ENCODE measurements at regions of chr14 and their contacts with region 1.

Region 1: GRCh38 chr14:53295985-53296582 is 143.0 kb upstream of the DDHD1 start:
- DNase-seq: no peak
- H3K4me3 Mint-ChIP-seq: no peak overlapping the region
- H3K27ac Mint-ChIP-seq: no peak overlapping the region
- H3K4me1 Mint-ChIP-seq: peaks cover 3% of the 10 kb centered on the region
- H3K27me3 Mint-ChIP-seq: no peaks in the 10 kb centered on the region

Region 2: GRCh38 chr14:53285805-53286204 is 10.3 kb before region 1 on chr14:
- CTCF ChIA-PET with region 1: interaction called, 12 read pairs
- POLR2A ChIA-PET with region 1: no interaction called
- intact Hi-C with region 1: no loop called
- DNase-seq: no peak
- H3K4me3 Mint-ChIP-seq: no peak overlapping the region
- H3K27ac Mint-ChIP-seq: no peak overlapping the region
- H3K4me1 Mint-ChIP-seq: no peaks in the 10 kb centered on the region
- H3K27me3 Mint-ChIP-seq: no peaks in the 10 kb centered on the region

Region 3: DNA sequence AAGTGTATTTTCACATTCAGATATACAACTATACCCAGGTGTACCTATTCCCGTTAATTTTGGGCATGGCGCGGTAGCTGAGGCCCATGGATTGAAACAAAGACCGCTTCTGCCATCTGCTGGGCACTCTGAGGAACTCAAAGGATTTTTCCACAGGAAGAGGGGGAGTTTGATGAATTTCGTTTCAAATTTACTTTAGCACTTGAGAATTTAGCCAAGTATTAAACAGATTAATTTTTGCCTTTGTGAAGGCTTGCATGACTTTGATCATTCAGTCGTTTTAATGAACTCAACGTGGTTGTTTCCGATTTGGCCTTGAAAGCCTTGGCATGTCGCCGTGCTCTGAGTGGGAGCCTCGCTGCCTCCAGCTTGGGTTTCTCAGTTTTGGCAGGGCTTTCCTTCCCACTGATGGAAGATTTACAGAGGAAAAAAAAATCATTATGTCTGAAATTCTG is 10.2 kb after region 1 on chr14:
- CTCF ChIA-PET with region 1: interaction called, 56 read pairs
- POLR2A ChIA-PET with region 1: no interaction called
- intact Hi-C with region 1: no loop called
- DNase-seq: peak; percentile 58
- H3K4me3 Mint-ChIP-seq: peak overlapping the region; percentile 55
- H3K27ac Mint-ChIP-seq: peak overlapping the region; percentile 40
- H3K4me1 Mint-ChIP-seq: peaks cover 6% of the 10 kb centered on the region
- H3K27me3 Mint-ChIP-seq: peaks cover 1% of the 10 kb centered on the region

Region 4: GRCh38 chr14:53325176-53325806 is 29.2 kb after region 1 on chr14:
- CTCF ChIA-PET with region 1: interaction called, 11 read pairs
- POLR2A ChIA-PET with region 1: no interaction called
- intact Hi-C with region 1: no loop called
- DNase-seq: no peak
- H3K4me3 Mint-ChIP-seq: no peak overlapping the region
- H3K27ac Mint-ChIP-seq: no peak overlapping the region
- H3K4me1 Mint-ChIP-seq: no peaks in the 10 kb centered on the region
- H3K27me3 Mint-ChIP-seq: no peaks in the 10 kb centered on the region

Region 5: GRCh38 chr14:53399057-53399456 is 103.0 kb after region 1 on chr14:
- CTCF ChIA-PET with region 1: no interaction called
- POLR2A ChIA-PET with region 1: no interaction called
- intact Hi-C with region 1: no loop called
- DNase-seq: no peak
- H3K4me3 Mint-ChIP-seq: no peak overlapping the region
- H3K27ac Mint-ChIP-seq: no peak overlapping the region
- H3K4me1 Mint-ChIP-seq: no peaks in the 10 kb centered on the region
- H3K27me3 Mint-ChIP-seq: no peaks in the 10 kb centered on the region

Measured in activated CD4-positive, alpha-beta memory T cell treated with anti-CD3 and anti-CD28 coated beads for 36 hours (primary cell).